ENCODE measurements at regions of chr12 and their contacts with region 1.

Region 1: DNA sequence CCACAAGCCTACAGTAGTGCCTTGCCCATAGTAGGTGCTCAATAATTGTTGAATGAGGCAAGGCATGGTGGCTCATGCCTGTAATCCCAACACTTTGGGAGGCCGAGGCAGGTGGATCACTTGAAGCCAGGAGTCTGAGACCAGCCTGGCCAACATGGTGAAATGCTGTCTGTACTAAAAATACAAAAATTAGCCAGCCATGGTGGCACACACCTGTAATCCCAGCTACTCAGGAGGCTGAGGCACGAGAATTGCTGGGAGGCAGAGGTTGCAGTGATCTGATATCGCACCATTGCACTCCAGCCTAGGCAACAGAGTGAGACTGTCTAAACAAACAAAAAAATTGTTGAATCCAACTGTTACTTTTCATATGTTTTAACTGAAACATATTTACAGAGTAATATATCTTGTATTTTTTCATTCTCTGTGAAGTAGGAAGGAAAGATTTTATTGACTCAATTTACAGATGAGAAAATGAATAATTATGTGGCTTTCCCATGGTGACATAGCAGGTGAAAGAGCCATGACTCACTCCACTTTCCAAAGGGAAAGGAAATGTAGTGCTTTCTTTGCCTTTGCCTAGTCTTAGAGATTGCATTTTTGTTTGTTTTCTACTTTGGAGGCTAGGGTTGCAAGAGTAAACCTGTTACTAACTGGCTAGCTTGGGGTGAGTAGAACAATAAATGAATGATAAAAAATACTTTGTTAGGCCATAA is 95.4 kb upstream of the SLC38A4 start:
- DNase-seq: no peak

Region 2: GRCh38 chr12:46686267-46686942 is 234.8 kb before region 1 on chr12:
- intact Hi-C with region 1: loop called in 1 of 2 experiments (anchors 10 kb)
- DNase-seq: no peak